Gastrocnemius medialis (tissue), 4 donors: ENCODE measurements at regions of chr5 and their contacts with region 1.

Region 1: DNA sequence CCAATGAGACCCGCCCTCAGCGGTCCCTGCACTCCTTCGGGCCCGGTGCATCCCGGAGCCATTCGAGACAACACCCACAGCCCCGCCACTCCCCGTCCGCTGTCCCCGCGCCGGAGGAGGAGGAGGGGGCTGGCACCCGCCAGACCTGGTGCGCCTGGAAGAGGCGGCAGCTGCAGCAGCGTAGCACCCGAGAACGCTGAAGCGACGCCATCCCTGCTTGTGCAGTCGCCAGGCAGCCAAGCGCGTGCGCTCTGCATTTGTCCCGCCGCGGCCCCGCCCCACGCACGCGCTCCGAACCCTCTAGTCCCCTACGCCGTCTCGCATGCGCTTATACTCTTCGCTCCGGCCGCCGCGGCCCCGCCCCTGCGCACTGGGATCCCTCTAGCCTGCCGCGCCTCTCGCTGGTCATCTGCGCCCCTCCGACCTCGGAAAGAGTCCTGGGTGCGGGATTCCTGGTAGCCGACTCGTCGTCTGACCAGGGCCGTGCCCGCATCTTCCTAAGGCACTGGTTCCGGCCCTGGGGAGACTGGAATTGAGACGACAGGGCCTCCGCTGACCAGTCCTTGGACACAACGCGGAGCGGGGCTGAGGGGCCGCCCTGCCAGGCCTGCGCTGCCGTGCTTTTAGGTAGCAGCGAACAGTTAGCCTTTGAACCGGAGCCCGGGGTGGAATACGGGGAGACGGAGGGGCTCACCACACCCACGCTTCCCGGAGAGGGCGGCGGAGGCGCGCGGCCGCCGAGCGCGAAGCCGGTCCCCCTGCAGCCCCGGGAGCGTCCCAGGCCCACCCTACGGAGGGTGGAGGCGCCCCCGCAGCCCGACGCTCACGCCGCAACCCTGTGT is at the start of gene MRNIP:
- DNase-seq: peak; percentile 96 to 97
- ATAC-seq: peak; percentile 94 to 95
- H3K4me3 ChIP-seq: peak within 1 kb of the TSS; percentile 86 to 98 (median 92)
- H3K27ac ChIP-seq: peak within 1 kb of the TSS; percentile 89 to 98 (median 97)
- H3K4me1 ChIP-seq: peaks cover 13 to 16% of the 10 kb centered on the region in 2 donors
- H3K27me3 ChIP-seq: no peaks in the 10 kb centered on the region
- CTCF ChIP-seq: peak in 3 of 5 experiments; percentile 26 to 54 (median 40)
- POLR2A ChIP-seq: peak; percentile 81 to 82
- total RNA-seq, gene MRNIP: 2.9 to 16.1 (median 8.3) TPM

Region 2: GRCh38 chr5:179678223-179679013 is 180.4 kb before region 1 on chr5:
- in situ Hi-C with region 1: no loop called
- intact Hi-C with region 1: loop called (anchors 5 kb)
- DNase-seq: peak; percentile 89 to 94
- ATAC-seq: peak; percentile 96 to 97
- H3K4me3 ChIP-seq: peak overlapping the region; percentile 77 to 100 (median 84)
- H3K27ac ChIP-seq: peak overlapping the region; percentile 88 to 99 (median 92)
- H3K4me1 ChIP-seq: peaks cover 9 to 12% of the 10 kb centered on the region in 2 donors
- H3K27me3 ChIP-seq: no peaks in the 10 kb centered on the region
- CTCF ChIP-seq: peak in 2 of 5 experiments; percentile 21 to 25
- POLR2A ChIP-seq: peak; percentile 76 to 77

Region 3: GRCh38 chr5:179763215-179763945 is 95.4 kb before region 1 on chr5:
- in situ Hi-C with region 1: loop called in 1 of 4 experiments (anchors 25 kb)
- intact Hi-C with region 1: no loop called
- DNase-seq: peak; percentile 23 to 51
- ATAC-seq: peak; percentile 81 to 82
- H3K4me3 ChIP-seq: no peak overlapping the region
- H3K27ac ChIP-seq: peak overlapping the region; percentile 18 to 48 (median 26)
- H3K4me1 ChIP-seq: peaks cover 56 to 57% of the 10 kb centered on the region in 2 donors
- H3K27me3 ChIP-seq: no peaks in the 10 kb centered on the region
- CTCF ChIP-seq: peak; percentile 68 to 89 (median 74)
- POLR2A ChIP-seq: no peak

Region 4: GRCh38 chr5:179806250-179807222 is 52.3 kb before region 1 on chr5 and contains the start of gene MGAT4B:
- in situ Hi-C with region 1: no loop called
- intact Hi-C with region 1: loop called (anchors 1 kb)
- DNase-seq: peak; percentile 56 to 69
- ATAC-seq: peak; percentile 72 to 76
- H3K4me3 ChIP-seq: peak within 1 kb of the TSS; percentile 75 to 95 (median 87)
- H3K27ac ChIP-seq: peak within 1 kb of the TSS; percentile 89 to 98 (median 94)
- H3K4me1 ChIP-seq: peaks cover 19 to 36% of the 10 kb centered on the region in 2 donors
- H3K27me3 ChIP-seq: no peaks in the 10 kb centered on the region
- CTCF ChIP-seq: no peak
- POLR2A ChIP-seq: peak; percentile 73
- total RNA-seq, gene MGAT4B: 28.3 to 86.0 (median 61.4) TPM

Region 5: DNA sequence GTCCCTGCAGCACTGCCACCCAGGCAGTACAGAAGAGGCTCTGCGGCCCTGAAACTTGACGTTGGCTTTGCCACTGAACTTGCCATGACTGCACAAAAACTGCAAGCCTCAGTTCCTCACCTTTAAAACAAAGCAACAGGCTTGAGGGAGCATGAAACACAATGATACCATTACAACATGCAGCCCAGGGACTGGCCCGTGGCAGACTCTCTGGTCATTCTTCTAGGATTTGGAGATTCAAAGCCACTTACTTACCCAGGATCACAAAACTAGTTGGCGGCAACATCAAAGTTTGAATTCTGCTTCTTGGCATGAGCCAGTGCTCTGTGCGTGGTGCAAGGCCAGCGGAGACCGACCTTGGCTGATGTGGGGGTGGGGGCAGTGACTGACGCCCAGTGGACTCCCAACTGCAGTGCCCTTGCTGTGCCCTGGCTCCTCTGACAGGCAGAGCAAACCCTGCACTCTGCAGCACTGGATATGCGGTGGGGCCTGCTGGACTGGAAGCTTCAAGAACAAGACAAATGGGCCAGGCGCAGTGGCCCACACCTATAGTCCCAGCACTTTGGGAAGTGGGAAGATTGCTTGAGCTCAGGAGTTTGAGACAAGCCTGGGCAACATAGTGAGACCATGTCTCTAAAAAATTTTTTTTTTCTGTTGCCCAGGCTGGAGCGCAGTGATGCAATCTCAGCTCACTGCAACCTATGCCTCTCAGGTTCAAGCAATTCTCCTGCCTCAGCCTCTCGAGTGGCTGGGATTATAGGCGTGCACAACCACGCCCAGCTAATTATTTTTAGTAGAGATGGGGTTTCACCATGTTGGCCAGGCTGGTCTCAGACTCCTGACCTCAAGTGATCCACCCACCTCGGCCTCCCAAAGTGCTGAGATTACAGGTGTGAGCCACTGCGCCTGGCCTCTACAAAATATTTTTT is 19.2 kb before region 1 on chr5:
- in situ Hi-C with region 1: no loop called
- intact Hi-C with region 1: loop called (anchors 1 kb)
- DNase-seq: peak in 1 of 2 donors; percentile 88
- ATAC-seq: peak; percentile 54 to 66
- H3K4me3 ChIP-seq: no peak overlapping the region
- H3K27ac ChIP-seq: peak overlapping the region; percentile 87 to 92 (median 88)
- H3K4me1 ChIP-seq: peaks cover 30 to 43% of the 10 kb centered on the region in 2 donors
- H3K27me3 ChIP-seq: no peaks in the 10 kb centered on the region
- CTCF ChIP-seq: no peak
- POLR2A ChIP-seq: peak; percentile 40 to 59

Region 6: DNA sequence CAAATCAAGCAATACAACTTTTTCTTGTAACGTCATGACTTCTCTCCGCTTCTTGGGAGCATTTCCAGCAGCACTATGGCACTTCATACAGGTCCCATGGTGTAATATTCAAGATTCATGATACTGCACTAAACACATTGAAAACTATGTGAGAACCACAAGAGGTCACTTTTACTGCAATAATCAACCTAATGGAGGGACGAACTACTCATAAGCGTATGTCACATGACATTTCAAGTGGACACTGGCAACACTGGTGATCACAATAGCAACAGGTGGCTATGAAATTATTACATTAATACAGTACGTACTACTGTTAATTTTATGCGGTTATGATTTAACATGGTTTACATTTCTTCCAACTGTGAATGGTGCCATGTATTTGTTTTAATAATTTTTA is 127.5 kb after region 1 on chr5:
- in situ Hi-C with region 1: no loop called
- intact Hi-C with region 1: no loop called
- DNase-seq: no peak
- ATAC-seq: peak; percentile 82 to 90
- H3K4me3 ChIP-seq: no peak overlapping the region
- H3K27ac ChIP-seq: no peak overlapping the region
- H3K4me1 ChIP-seq: peaks cover 0 to 3% of the 10 kb centered on the region in 2 donors
- H3K27me3 ChIP-seq: no peaks in the 10 kb centered on the region
- CTCF ChIP-seq: no peak
- POLR2A ChIP-seq: no peak